ENCODE measurements at regions of chr9 and their contacts with region 1.

Region 1: GRCh38 chr9:15104826-15105420 is 194.7 kb upstream of the FREM1 start:
- DNase-seq: peak; percentile 60
- ATAC-seq: peak; percentile 88
- H3K4me3 Mint-ChIP-seq: no peak overlapping the region
- H3K27ac Mint-ChIP-seq: no peak overlapping the region
- H3K4me1 Mint-ChIP-seq: no peaks in the 10 kb centered on the region
- H3K27me3 Mint-ChIP-seq: peaks cover 6% of the 10 kb centered on the region

Region 2: GRCh38 chr9:15142878-15143534 is 38.1 kb after region 1 on chr9:
- CTCF ChIA-PET with region 1: interaction called, 100 read pairs
- POLR2A ChIA-PET with region 1: no interaction called
- intact Hi-C with region 1: loop called (anchors 2 kb)
- DNase-seq: no peak
- ATAC-seq: peak; percentile 84
- H3K4me3 Mint-ChIP-seq: no peak overlapping the region
- H3K27ac Mint-ChIP-seq: no peak overlapping the region
- H3K4me1 Mint-ChIP-seq: peaks cover 3% of the 10 kb centered on the region
- H3K27me3 Mint-ChIP-seq: peaks cover 7% of the 10 kb centered on the region

Region 3: GRCh38 chr9:15416880-15417279 is 312.0 kb after region 1 on chr9:
- CTCF ChIA-PET with region 1: interaction called, 3 read pairs
- POLR2A ChIA-PET with region 1: no interaction called
- intact Hi-C with region 1: loop called (anchors 1 to 2 kb)
- DNase-seq: peak; percentile 61
- ATAC-seq: no peak
- H3K4me3 Mint-ChIP-seq: no peak overlapping the region
- H3K27ac Mint-ChIP-seq: no peak overlapping the region
- H3K4me1 Mint-ChIP-seq: peaks cover 1% of the 10 kb centered on the region
- H3K27me3 Mint-ChIP-seq: no peaks in the 10 kb centered on the region

Region 4: GRCh38 chr9:15642369-15642962 is 537.5 kb after region 1 on chr9:
- CTCF ChIA-PET with region 1: interaction called, 3 read pairs
- POLR2A ChIA-PET with region 1: no interaction called
- intact Hi-C with region 1: loop called in 1 of 2 experiments (anchors 10 kb)
- DNase-seq: no peak
- ATAC-seq: no peak
- H3K4me3 Mint-ChIP-seq: no peak overlapping the region
- H3K27ac Mint-ChIP-seq: no peak overlapping the region
- H3K4me1 Mint-ChIP-seq: no peaks in the 10 kb centered on the region
- H3K27me3 Mint-ChIP-seq: peaks cover 3% of the 10 kb centered on the region

Measured in activated CD4-positive, alpha-beta T cell treated with anti-CD3 and anti-CD28 coated beads for 36 hours (primary cell).